SK-N-SH (cell line): ENCODE measurements at regions of chr19 and their contacts with region 1.

Region 1: DNA sequence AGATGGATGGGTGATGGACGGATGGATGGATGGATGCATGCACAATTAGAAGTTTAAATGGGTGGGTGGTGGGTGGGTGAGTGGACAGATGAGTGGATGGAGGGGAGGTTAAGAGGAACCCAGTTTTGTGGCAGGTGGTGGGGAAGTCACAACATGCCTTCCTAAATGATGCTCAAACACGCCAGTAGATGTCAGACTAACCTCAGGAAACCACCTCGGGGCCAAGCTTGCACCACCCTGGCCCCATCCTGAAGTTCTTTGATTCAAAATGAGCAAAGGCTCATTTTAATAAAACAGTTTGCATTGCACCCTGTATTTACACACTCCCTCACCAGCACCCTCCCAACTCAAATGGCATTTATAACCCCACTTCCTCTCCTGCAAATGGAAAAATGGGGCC is 91.4 kb upstream of the CACNA1A start:
- DNase-seq: peak; percentile 82
- H3K4me3 ChIP-seq: no peak overlapping the region
- H3K27ac ChIP-seq: no peak overlapping the region
- H3K4me1 ChIP-seq: no peaks in the 10 kb centered on the region
- H3K27me3 ChIP-seq: peaks cover 46% of the 10 kb centered on the region
- CTCF ChIP-seq: peak; percentile 74
- EP300 ChIP-seq: no peak
- RAD21 ChIP-seq: peak; percentile 86

Region 2: DNA sequence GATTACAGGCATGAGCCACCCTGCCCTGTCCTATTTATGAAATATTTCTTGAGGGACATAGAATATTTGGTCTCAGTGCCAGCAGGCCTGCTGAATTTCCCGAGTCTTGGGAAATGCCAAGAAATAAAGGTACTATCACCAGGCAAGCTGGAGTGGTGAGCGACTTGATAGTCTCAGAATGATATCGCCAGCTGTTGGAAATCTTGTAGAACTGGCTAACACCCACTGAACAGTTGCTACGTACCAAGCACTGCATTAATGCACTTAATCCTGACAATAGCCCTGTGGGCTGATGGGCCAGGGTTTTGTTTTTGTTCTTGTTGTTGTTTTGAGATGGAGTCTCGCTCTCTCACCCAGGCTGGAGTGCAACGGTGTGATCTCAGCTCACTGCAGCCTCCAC is 124.5 kb after region 1 on chr19:
- CTCF ChIA-PET with region 1: interaction called, 14 read pairs
- POLR2A ChIA-PET with region 1: no interaction called
- DNase-seq: no peak
- H3K4me3 ChIP-seq: no peak overlapping the region
- H3K27ac ChIP-seq: no peak overlapping the region
- H3K4me1 ChIP-seq: no peaks in the 10 kb centered on the region
- H3K27me3 ChIP-seq: no peaks in the 10 kb centered on the region
- CTCF ChIP-seq: no peak
- EP300 ChIP-seq: no peak
- RAD21 ChIP-seq: no peak